ENCODE measurements at regions of chr5 and their contacts with region 1.

Region 1: GRCh38 chr5:180467041-180467440 is 27.1 kb upstream of the CNOT6 start:
- DNase-seq: peak; percentile 86 to 88 (median 87)
- ATAC-seq: peak; percentile 89
- H3K4me3 ChIP-seq: no peak overlapping the region
- H3K4me1 ChIP-seq: peaks cover 14% of the 10 kb centered on the region
- CTCF ChIP-seq: no peak

Region 2: DNA sequence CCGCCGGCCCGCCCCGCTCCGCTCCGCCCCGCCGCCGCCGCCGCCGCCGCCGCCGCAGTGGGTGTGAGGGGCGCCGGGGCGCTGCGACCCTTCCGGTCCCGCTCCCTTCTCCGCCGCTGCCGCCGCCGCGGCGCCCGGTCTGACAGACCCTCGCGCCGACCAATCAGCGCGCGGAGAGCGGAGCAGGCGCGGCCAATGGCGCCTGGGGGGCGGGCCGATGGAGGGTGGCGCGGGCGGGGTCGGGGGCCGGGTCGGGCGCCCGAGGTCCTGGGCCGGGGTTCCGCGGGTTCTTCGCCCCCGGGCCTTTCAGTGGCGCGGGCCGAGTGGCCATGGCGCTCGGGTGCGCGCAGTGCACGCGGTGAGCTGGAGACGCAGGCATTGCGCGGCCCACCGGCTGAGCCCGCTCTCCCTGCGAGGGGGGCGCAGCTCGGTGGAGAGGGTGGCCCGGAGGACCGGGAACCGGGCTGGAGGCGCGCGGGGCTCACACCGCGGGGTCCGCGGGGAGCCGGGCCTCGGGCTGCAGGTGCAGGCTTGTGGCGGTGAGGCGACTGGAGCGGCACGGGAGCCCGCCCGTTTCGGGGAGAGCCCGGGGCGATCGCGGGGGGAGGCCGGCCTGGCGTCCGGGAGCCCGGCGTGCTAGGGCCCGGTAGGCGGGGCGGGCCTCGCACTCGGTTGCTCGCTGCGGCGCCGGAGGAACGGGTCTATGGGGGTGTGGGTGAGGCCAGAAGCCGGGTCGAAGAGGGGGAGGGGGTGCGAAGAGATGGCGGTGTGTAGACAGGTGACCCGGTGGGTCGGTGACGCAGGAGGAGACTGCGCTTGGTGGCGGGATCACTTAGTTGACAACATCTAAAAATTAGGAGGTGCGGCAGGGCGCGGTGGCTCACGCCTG is 174.9 kb before region 1 on chr5 and contains the start of gene MAPK9:
- intact Hi-C with region 1: loop called in 1 of 2 experiments (anchors 10 kb)
- DNase-seq: peak; percentile 89 to 92 (median 89)
- ATAC-seq: peak; percentile 87
- H3K4me3 ChIP-seq: peak within 1 kb of the TSS; percentile 98
- H3K4me1 ChIP-seq: peaks cover 20% of the 10 kb centered on the region
- CTCF ChIP-seq: no peak
- total RNA-seq, gene MAPK9: 37.4 to 54.1 (median 41.3) TPM

Region 3: GRCh38 chr5:180575571-180575970 is 108.5 kb after region 1 on chr5:
- intact Hi-C with region 1: no loop called
- DNase-seq: no peak
- ATAC-seq: no peak
- H3K4me3 ChIP-seq: no peak overlapping the region
- H3K4me1 ChIP-seq: no peaks in the 10 kb centered on the region
- CTCF ChIP-seq: no peak

Region 4: GRCh38 chr5:180683220-180683922 is 216.3 kb after region 1 on chr5:
- intact Hi-C with region 1: no loop called
- DNase-seq: no peak
- ATAC-seq: no peak
- H3K4me3 ChIP-seq: no peak overlapping the region
- H3K4me1 ChIP-seq: no peaks in the 10 kb centered on the region
- CTCF ChIP-seq: no peak

Measured in mucosa of descending colon (tissue), 3 donors.